B cell (primary cell): ENCODE measurements at regions of chr3 and their contacts with region 1.

Region 1: GRCh38 chr3:45507820-45508317 is 86.7 kb upstream of the LIMD1 start:
- DNase-seq: no peak
- ATAC-seq: no peak
- H3K4me3 ChIP-seq: no peak overlapping the region
- H3K4me3 Mint-ChIP-seq: no peak overlapping the region
- H3K27ac ChIP-seq: no peak overlapping the region
- H3K27ac Mint-ChIP-seq: no peak overlapping the region
- H3K4me1 ChIP-seq: no peaks in the 10 kb centered on the region
- H3K4me1 Mint-ChIP-seq: no peaks in the 10 kb centered on the region
- H3K27me3 ChIP-seq: no peaks in the 10 kb centered on the region
- H3K27me3 Mint-ChIP-seq: no peaks in the 10 kb centered on the region
- CTCF ChIP-seq: no peak

Region 2: GRCh38 chr3:45551214-45552010 is 43.5 kb after region 1 on chr3:
- CTCF ChIA-PET with region 1: no interaction called
- POLR2A ChIA-PET with region 1: no interaction called
- intact Hi-C with region 1: no loop called
- DNase-seq: no peak
- ATAC-seq: no peak
- H3K4me3 ChIP-seq: no peak overlapping the region
- H3K4me3 Mint-ChIP-seq: no peak overlapping the region
- H3K27ac ChIP-seq: no peak overlapping the region
- H3K27ac Mint-ChIP-seq: no peak overlapping the region
- H3K4me1 ChIP-seq: peaks cover 12 to 30% of the 10 kb centered on the region in 2 donors
- H3K4me1 Mint-ChIP-seq: peaks cover 33% of the 10 kb centered on the region
- H3K27me3 ChIP-seq: no peaks in the 10 kb centered on the region
- H3K27me3 Mint-ChIP-seq: no peaks in the 10 kb centered on the region
- CTCF ChIP-seq: no peak

Region 3: GRCh38 chr3:45583021-45583851 is 75.4 kb after region 1 on chr3:
- CTCF ChIA-PET with region 1: no interaction called
- POLR2A ChIA-PET with region 1: no interaction called
- intact Hi-C with region 1: no loop called
- DNase-seq: no peak
- ATAC-seq: no peak
- H3K4me3 ChIP-seq: no peak overlapping the region
- H3K4me3 Mint-ChIP-seq: no peak overlapping the region
- H3K27ac ChIP-seq: no peak overlapping the region
- H3K27ac Mint-ChIP-seq: no peak overlapping the region
- H3K4me1 ChIP-seq: no peaks in the 10 kb centered on the region
- H3K4me1 Mint-ChIP-seq: peaks cover 10% of the 10 kb centered on the region
- H3K27me3 ChIP-seq: no peaks in the 10 kb centered on the region
- H3K27me3 Mint-ChIP-seq: no peaks in the 10 kb centered on the region
- CTCF ChIP-seq: no peak

Region 4: DNA sequence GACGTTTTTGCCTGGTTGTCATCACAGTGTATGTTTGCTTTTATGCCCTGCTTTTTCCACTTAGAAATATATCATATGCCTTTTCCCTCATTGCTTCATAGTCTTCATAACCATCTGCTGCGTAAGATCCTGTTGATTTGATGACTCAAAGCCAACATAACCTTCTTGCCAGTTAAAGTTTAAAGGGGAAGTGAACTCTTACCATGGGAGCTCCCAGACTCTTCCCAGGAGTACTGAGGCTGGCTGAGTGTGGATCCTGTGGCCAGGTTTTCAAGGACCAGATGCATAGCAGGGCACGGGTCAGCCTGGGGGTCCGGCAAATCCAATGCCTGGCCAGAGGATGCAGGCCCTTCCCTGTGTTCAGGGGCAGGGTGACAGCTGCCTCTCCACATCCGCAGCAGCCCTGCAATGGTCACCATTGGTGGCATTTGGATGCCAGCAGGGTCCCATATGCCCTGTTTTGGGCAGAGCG is 139.3 kb after region 1 on chr3:
- CTCF ChIA-PET with region 1: interaction called, 247 read pairs
- POLR2A ChIA-PET with region 1: no interaction called
- intact Hi-C with region 1: no loop called
- DNase-seq: no peak
- ATAC-seq: no peak
- H3K4me3 ChIP-seq: no peak overlapping the region
- H3K4me3 Mint-ChIP-seq: no peak overlapping the region
- H3K27ac ChIP-seq: no peak overlapping the region
- H3K27ac Mint-ChIP-seq: peak overlapping the region; percentile 0
- H3K4me1 ChIP-seq: peaks cover 0 to 1% of the 10 kb centered on the region in 2 donors
- H3K4me1 Mint-ChIP-seq: peaks cover 45% of the 10 kb centered on the region
- H3K27me3 ChIP-seq: no peaks in the 10 kb centered on the region
- H3K27me3 Mint-ChIP-seq: no peaks in the 10 kb centered on the region
- CTCF ChIP-seq: no peak

Region 5: GRCh38 chr3:45665101-45665572 is 157.3 kb after region 1 on chr3:
- CTCF ChIA-PET with region 1: interaction called, 186 read pairs
- POLR2A ChIA-PET with region 1: no interaction called
- intact Hi-C with region 1: no loop called
- DNase-seq: peak; percentile 52
- ATAC-seq: peak; percentile 34
- H3K4me3 ChIP-seq: peak overlapping the region in 3 of 5 experiments; percentile 20 to 47 (median 26)
- H3K4me3 Mint-ChIP-seq: peak overlapping the region; percentile 68
- H3K27ac ChIP-seq: peak overlapping the region; percentile 36 to 72
- H3K27ac Mint-ChIP-seq: peak overlapping the region; percentile 66
- H3K4me1 ChIP-seq: peaks cover 12 to 18% of the 10 kb centered on the region in 2 donors
- H3K4me1 Mint-ChIP-seq: peaks cover 24% of the 10 kb centered on the region
- H3K27me3 ChIP-seq: no peaks in the 10 kb centered on the region
- H3K27me3 Mint-ChIP-seq: no peaks in the 10 kb centered on the region
- CTCF ChIP-seq: peak; percentile 33

Region 6: DNA sequence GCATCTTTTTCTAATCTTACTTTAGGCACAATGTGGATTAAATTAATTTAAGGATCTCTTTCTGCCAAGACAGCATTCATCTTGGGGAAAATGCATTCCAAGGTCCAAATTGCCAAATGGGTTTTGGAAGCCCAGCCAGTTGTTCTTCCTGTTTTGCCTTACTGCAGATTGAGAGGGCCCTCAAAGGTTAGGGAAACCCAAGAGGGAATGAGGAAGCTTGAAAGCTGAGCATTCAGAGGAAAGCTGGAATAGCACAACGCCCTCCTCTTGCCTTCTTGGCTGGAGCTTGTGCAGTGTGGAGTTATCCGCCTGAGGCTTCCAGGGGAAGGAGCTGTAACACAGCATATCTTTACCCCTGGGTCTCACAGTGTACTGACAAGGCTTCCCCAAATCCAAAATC is 163.1 kb after region 1 on chr3:
- CTCF ChIA-PET with region 1: interaction called, 26 read pairs
- POLR2A ChIA-PET with region 1: no interaction called
- intact Hi-C with region 1: no loop called
- DNase-seq: no peak
- ATAC-seq: no peak
- H3K4me3 ChIP-seq: no peak overlapping the region
- H3K4me3 Mint-ChIP-seq: no peak overlapping the region
- H3K27ac ChIP-seq: no peak overlapping the region
- H3K27ac Mint-ChIP-seq: no peak overlapping the region
- H3K4me1 ChIP-seq: no peaks in the 10 kb centered on the region
- H3K4me1 Mint-ChIP-seq: peaks cover 4% of the 10 kb centered on the region
- H3K27me3 ChIP-seq: no peaks in the 10 kb centered on the region
- H3K27me3 Mint-ChIP-seq: no peaks in the 10 kb centered on the region
- CTCF ChIP-seq: no peak

Region 7: GRCh38 chr3:45832691-45833090 is 324.8 kb after region 1 on chr3:
- CTCF ChIA-PET with region 1: no interaction called
- POLR2A ChIA-PET with region 1: no interaction called
- intact Hi-C with region 1: loop called (anchors 1 kb)
- DNase-seq: no peak
- ATAC-seq: no peak
- H3K4me3 ChIP-seq: no peak overlapping the region
- H3K4me3 Mint-ChIP-seq: no peak overlapping the region
- H3K27ac ChIP-seq: no peak overlapping the region
- H3K27ac Mint-ChIP-seq: no peak overlapping the region
- H3K4me1 ChIP-seq: no peaks in the 10 kb centered on the region
- H3K4me1 Mint-ChIP-seq: no peaks in the 10 kb centered on the region
- H3K27me3 ChIP-seq: no peaks in the 10 kb centered on the region
- H3K27me3 Mint-ChIP-seq: no peaks in the 10 kb centered on the region
- CTCF ChIP-seq: no peak

Region 8: GRCh38 chr3:45929042-45929679 is 421.3 kb after region 1 on chr3:
- CTCF ChIA-PET with region 1: interaction called, 22 read pairs
- POLR2A ChIA-PET with region 1: no interaction called
- intact Hi-C with region 1: no loop called
- DNase-seq: peak; percentile 70
- ATAC-seq: peak; percentile 81
- H3K4me3 ChIP-seq: no peak overlapping the region
- H3K4me3 Mint-ChIP-seq: no peak overlapping the region
- H3K27ac ChIP-seq: no peak overlapping the region
- H3K27ac Mint-ChIP-seq: no peak overlapping the region
- H3K4me1 ChIP-seq: no peaks in the 10 kb centered on the region
- H3K4me1 Mint-ChIP-seq: no peaks in the 10 kb centered on the region
- H3K27me3 ChIP-seq: no peaks in the 10 kb centered on the region
- H3K27me3 Mint-ChIP-seq: no peaks in the 10 kb centered on the region
- CTCF ChIP-seq: peak; percentile 81

Region 9: GRCh38 chr3:46378426-46378942 is 870.6 kb after region 1 on chr3:
- CTCF ChIA-PET with region 1: no interaction called
- POLR2A ChIA-PET with region 1: no interaction called
- intact Hi-C with region 1: no loop called
- DNase-seq: peak; percentile 64
- ATAC-seq: peak; percentile 51
- H3K4me3 ChIP-seq: no peak overlapping the region
- H3K4me3 Mint-ChIP-seq: no peak overlapping the region
- H3K27ac ChIP-seq: no peak overlapping the region
- H3K27ac Mint-ChIP-seq: peak overlapping the region; percentile 5
- H3K4me1 ChIP-seq: peaks cover 24 to 30% of the 10 kb centered on the region in 2 donors
- H3K4me1 Mint-ChIP-seq: peaks cover 41% of the 10 kb centered on the region
- H3K27me3 ChIP-seq: peaks cover 0 to 2% (median 0%) of the 10 kb centered on the region in 4 experiments
- H3K27me3 Mint-ChIP-seq: peaks cover 3% of the 10 kb centered on the region
- CTCF ChIP-seq: peak; percentile 72